Heart left ventricle (tissue), 16 donors: ENCODE measurements at regions of chr14 and their contacts with region 1.

Region 1: GRCh38 chr14:55430024-55430690 is 10.3 kb downstream of the TBPL2 start:
- DNase-seq: peak in 2 of 5 donors; percentile 35 to 37
- ATAC-seq: peak; percentile 72 to 81 (median 74)
- H3K4me3 ChIP-seq: no peak overlapping the region
- H3K27ac ChIP-seq: no peak overlapping the region
- H3K4me1 ChIP-seq: peaks cover 0 to 2% (median 0%) of the 10 kb centered on the region in 12 donors
- H3K27me3 ChIP-seq: no peaks in the 10 kb centered on the region
- CTCF ChIP-seq: peak; percentile 17 to 56 (median 40)
- POLR2A ChIP-seq: no peak

Region 2: DNA sequence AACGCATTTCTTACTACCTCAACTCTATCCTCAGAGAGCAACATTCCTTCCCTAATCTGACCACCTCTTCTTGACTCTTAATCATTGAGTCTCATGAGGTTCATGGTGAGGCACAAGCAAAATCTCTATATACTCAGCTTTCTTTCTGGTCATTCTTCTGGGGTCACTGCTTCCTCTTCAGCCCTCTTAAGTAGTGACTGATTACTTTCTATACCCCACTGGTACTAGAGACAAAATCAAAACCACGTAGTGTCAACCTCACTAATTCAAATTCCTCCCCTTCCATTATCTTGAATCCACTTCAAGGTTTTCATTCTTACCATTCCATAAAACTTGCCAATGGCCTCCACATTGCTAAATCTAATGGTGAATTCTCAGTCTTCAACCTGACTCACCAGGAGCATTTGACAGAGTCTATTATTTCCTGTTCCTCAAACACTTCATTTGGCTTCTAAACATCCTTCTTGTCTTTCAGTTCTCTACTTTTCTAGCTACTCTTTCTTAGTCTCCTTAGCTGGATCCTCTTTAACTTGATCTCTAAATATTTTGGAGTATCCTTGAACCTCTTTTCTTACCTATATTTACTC is 410.1 kb before region 1 on chr14:
- intact Hi-C with region 1: no loop called
- DNase-seq: no peak
- ATAC-seq: no peak
- H3K4me3 ChIP-seq: no peak overlapping the region
- H3K27ac ChIP-seq: no peak overlapping the region
- H3K4me1 ChIP-seq: no peaks in the 10 kb centered on the region
- H3K27me3 ChIP-seq: no peaks in the 10 kb centered on the region
- CTCF ChIP-seq: no peak
- POLR2A ChIP-seq: no peak

Region 3: GRCh38 chr14:55212634-55213033 is 217.5 kb before region 1 on chr14:
- intact Hi-C with region 1: loop called (anchors 1 to 10 kb)
- DNase-seq: no peak
- ATAC-seq: no peak
- H3K4me3 ChIP-seq: no peak overlapping the region
- H3K27ac ChIP-seq: no peak overlapping the region
- H3K4me1 ChIP-seq: no peaks in the 10 kb centered on the region
- H3K27me3 ChIP-seq: no peaks in the 10 kb centered on the region
- CTCF ChIP-seq: no peak
- POLR2A ChIP-seq: no peak

Region 4: GRCh38 chr14:55245657-55246268 is 184.4 kb before region 1 on chr14:
- intact Hi-C with region 1: loop called in 1 of 10 experiments (anchors 10 kb)
- DNase-seq: no peak
- ATAC-seq: no peak
- H3K4me3 ChIP-seq: no peak overlapping the region
- H3K27ac ChIP-seq: no peak overlapping the region
- H3K4me1 ChIP-seq: no peaks in the 10 kb centered on the region
- H3K27me3 ChIP-seq: peaks cover 0 to 6% (median 0%) of the 10 kb centered on the region in 9 donors
- CTCF ChIP-seq: peak; percentile 33 to 66 (median 55)
- POLR2A ChIP-seq: no peak

Region 5: DNA sequence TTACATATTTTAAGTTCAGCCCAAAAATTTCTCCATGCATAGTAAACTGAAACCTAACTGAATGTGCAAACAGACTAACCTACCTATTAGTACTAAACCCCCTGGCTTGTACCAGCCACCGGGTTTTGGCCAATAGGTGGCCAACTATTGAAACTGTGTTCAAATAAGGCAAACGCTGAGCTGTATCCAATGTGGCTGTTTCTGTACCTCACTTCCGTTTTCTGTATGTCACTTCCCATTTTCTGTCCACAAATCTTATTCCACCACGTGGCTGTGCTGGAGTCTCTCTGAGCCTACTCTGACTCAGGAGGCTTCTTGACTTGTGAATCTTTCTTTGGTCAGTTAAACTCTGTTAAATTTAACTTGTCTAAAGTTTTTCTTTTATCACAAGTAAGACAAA is 165.0 kb before region 1 on chr14:
- intact Hi-C with region 1: loop called in 2 of 10 experiments (anchors 5 kb)
- DNase-seq: no peak
- ATAC-seq: no peak
- H3K4me3 ChIP-seq: no peak overlapping the region
- H3K27ac ChIP-seq: no peak overlapping the region
- H3K4me1 ChIP-seq: peaks cover 0 to 3% (median 0%) of the 10 kb centered on the region in 12 donors
- H3K27me3 ChIP-seq: no peaks in the 10 kb centered on the region
- CTCF ChIP-seq: no peak
- POLR2A ChIP-seq: no peak

Region 6: DNA sequence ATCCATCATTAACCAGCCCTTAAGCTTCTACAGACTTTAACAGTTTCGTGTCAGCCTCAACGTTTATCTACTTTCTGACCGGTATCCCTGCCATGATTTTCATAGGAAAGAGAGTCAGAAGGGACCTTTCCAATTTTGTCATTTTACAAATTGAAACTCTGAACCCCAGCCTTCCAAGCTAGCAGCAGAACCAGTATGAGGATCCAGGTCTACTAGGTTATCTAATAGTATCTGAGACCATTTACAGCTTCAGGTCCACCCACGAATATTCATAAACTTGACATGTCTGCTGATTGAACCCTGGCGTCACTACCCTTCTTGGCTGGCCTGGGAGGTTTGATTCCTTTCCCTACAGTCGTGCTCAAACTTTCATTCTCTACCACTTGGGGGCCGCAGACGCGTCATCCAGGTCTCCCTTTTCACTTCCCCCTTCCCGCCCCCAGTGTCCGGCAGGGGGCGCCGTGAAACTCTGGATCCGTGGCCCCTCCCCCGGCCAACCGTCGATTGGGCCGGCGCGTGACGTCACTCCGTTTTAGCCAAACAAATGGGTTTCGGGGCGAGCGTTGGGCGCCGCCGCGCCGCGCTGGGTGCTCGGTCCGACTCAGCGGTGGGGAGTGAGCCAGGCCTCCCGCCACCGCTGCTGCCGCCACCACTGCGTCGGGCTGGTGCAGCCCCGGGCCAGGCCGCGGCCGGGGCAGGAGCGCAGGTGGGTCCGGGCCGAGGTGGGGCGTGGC is 159.2 kb before region 1 on chr14 and contains the start of gene FBXO34:
- intact Hi-C with region 1: loop called in 2 of 10 experiments (anchors 5 kb)
- DNase-seq: peak; percentile 98 to 100 (median 99)
- ATAC-seq: peak; percentile 90 to 94 (median 92)
- H3K4me3 ChIP-seq: peak within 1 kb of the TSS; percentile 70 to 99 (median 95)
- H3K27ac ChIP-seq: peak within 1 kb of the TSS; percentile 81 to 97 (median 93)
- H3K4me1 ChIP-seq: peaks cover 0 to 40% (median 27%) of the 10 kb centered on the region in 12 donors
- H3K27me3 ChIP-seq: no peaks in the 10 kb centered on the region
- CTCF ChIP-seq: peak; percentile 98 to 100 (median 99)
- POLR2A ChIP-seq: peak; percentile 34 to 96
- total RNA-seq, gene FBXO34: 17.1 to 33.4 (median 21.1) TPM